Transverse colon (tissue), 4 donors: ENCODE measurements at regions of chr5 and their contacts with region 1.

Region 1: GRCh38 chr5:174418928-174419796 is 305.2 kb upstream of the MSX2 start:
- DNase-seq: peak; percentile 87
- H3K4me3 ChIP-seq: no peak overlapping the region
- H3K27ac ChIP-seq: no peak overlapping the region
- H3K4me1 ChIP-seq: peaks cover 0 to 7% (median 3%) of the 10 kb centered on the region in 4 donors
- H3K27me3 ChIP-seq: peaks cover 22% of the 10 kb centered on the region
- CTCF ChIP-seq: peak; percentile 77 to 86 (median 81)
- EP300 ChIP-seq: no peak
- POLR2A ChIP-seq: no peak

Region 2: GRCh38 chr5:173557123-173557903 is 861.8 kb before region 1 on chr5:
- in situ Hi-C with region 1: no loop called
- intact Hi-C with region 1: no loop called
- DNase-seq: no peak
- H3K4me3 ChIP-seq: no peak overlapping the region
- H3K27ac ChIP-seq: no peak overlapping the region
- H3K4me1 ChIP-seq: no peaks in the 10 kb centered on the region
- H3K27me3 ChIP-seq: peaks cover 6% of the 10 kb centered on the region
- CTCF ChIP-seq: no peak
- EP300 ChIP-seq: no peak
- POLR2A ChIP-seq: no peak

Region 3: GRCh38 chr5:174472956-174473355 is 53.8 kb after region 1 on chr5:
- in situ Hi-C with region 1: no loop called
- intact Hi-C with region 1: no loop called
- DNase-seq: no peak
- H3K4me3 ChIP-seq: no peak overlapping the region
- H3K27ac ChIP-seq: no peak overlapping the region
- H3K4me1 ChIP-seq: no peaks in the 10 kb centered on the region
- H3K27me3 ChIP-seq: no peaks in the 10 kb centered on the region
- CTCF ChIP-seq: no peak
- EP300 ChIP-seq: no peak
- POLR2A ChIP-seq: no peak

Region 4: DNA sequence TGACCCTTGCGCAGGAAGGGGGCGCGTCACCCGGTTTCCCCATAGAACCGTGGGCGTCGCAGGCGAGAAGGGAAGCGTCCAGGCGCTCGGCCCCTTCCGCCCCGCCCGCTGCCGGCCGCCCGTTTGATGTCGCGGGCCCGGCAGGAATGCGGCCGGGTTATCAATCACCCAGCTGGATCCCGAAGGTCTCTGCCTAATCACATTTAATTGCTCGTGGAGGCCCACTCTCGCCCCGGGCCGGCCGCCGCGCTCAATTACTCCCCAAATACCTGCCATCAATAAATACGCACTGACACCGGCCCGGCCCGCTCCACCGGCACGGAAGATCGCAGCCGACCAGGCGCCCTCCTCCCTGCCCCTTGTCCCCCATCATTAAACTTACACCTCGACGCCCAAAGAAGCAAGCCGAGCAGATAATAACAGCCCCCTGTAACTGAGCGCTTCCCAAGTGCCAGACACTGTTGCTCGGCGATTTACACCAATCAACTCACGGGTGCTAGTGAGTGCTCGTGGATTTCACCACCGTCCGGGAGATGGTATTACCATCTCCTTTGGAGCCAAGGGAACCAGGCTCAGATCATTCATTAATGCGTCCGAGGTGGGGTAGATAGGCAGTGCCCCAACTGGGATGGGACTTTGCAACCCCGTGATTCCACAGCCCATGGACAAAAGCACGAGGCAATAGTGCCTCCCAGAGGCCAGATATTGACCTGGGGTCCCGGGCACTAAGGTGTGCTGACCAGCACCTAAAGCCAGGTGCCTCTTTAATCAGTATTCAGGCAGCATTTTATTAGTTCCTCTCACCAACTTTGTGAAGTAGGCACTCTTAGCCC is 316.6 kb after region 1 on chr5:
- in situ Hi-C with region 1: loop called in 1 of 4 experiments (anchors 10 kb)
- intact Hi-C with region 1: no loop called
- DNase-seq: no peak
- H3K4me3 ChIP-seq: no peak overlapping the region
- H3K27ac ChIP-seq: no peak overlapping the region
- H3K4me1 ChIP-seq: peaks cover 0 to 7% (median 0%) of the 10 kb centered on the region in 4 donors
- H3K27me3 ChIP-seq: peaks cover 80% of the 10 kb centered on the region
- CTCF ChIP-seq: peak in 4 of 5 experiments; percentile 19 to 27 (median 24)
- EP300 ChIP-seq: no peak
- POLR2A ChIP-seq: no peak

Region 5: DNA sequence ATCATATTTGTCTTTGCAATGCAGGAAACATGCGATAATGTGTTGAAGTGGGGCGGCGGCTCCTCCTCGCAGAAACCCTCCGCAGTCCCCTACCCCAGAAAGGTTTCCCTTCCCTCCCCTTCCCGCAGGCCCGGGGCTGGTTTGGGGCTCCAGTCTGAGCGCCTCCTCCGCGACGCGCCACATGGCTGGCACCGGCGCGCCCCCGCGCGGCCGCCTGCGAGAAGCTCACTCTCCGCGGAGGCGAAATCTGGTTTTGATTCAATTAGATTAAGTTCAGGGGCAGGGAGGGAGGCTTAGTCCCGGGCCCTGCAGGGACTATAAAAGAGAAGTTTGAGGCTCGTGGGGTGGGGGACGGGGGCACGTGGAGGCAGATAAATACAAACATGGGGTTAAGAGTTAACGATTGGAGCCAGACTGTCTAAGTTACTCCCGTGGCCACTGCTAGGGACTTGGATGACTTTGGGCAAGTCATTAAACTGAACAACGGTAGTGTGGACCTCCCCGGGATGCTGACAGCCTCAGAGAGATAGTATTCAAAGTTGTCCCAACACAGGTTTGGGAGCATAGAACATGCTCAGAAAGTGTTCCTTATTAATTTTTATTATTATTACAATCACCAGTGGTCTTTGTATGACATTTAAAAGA is 374.6 kb after region 1 on chr5:
- in situ Hi-C with region 1: loop called (anchors 5 to 25 kb)
- intact Hi-C with region 1: no loop called
- DNase-seq: peak; percentile 33
- H3K4me3 ChIP-seq: no peak overlapping the region
- H3K27ac ChIP-seq: no peak overlapping the region
- H3K4me1 ChIP-seq: peaks cover 0 to 7% (median 0%) of the 10 kb centered on the region in 4 donors
- H3K27me3 ChIP-seq: peaks cover 18% of the 10 kb centered on the region
- CTCF ChIP-seq: peak; percentile 59 to 80 (median 77)
- EP300 ChIP-seq: no peak
- POLR2A ChIP-seq: no peak

Region 6: GRCh38 chr5:174935854-174936474 is 516.8 kb after region 1 on chr5:
- in situ Hi-C with region 1: loop called in 3 of 4 experiments (anchors 25 kb)
- intact Hi-C with region 1: loop called (anchors 10 kb)
- DNase-seq: peak; percentile 35
- H3K4me3 ChIP-seq: no peak overlapping the region
- H3K27ac ChIP-seq: no peak overlapping the region
- H3K4me1 ChIP-seq: no peaks in the 10 kb centered on the region
- H3K27me3 ChIP-seq: no peaks in the 10 kb centered on the region
- CTCF ChIP-seq: peak; percentile 63 to 86 (median 83)
- EP300 ChIP-seq: no peak
- POLR2A ChIP-seq: no peak